Adrenal gland (tissue), 19 donors: ENCODE measurements at regions of chr7 and their contacts with region 1.

Region 1: GRCh38 chr7:93055543-93056107 is 62.2 kb downstream of the SAMD9 start:
- DNase-seq: no peak
- H3K4me3 ChIP-seq: no peak overlapping the region
- H3K27ac ChIP-seq: no peak overlapping the region
- H3K4me1 ChIP-seq: peaks cover 0 to 7% of the 10 kb centered on the region in 2 donors
- H3K27me3 ChIP-seq: peaks cover 3% of the 10 kb centered on the region
- CTCF ChIP-seq: peak; percentile 58 to 92 (median 82)
- POLR2A ChIP-seq: no peak

Region 2: DNA sequence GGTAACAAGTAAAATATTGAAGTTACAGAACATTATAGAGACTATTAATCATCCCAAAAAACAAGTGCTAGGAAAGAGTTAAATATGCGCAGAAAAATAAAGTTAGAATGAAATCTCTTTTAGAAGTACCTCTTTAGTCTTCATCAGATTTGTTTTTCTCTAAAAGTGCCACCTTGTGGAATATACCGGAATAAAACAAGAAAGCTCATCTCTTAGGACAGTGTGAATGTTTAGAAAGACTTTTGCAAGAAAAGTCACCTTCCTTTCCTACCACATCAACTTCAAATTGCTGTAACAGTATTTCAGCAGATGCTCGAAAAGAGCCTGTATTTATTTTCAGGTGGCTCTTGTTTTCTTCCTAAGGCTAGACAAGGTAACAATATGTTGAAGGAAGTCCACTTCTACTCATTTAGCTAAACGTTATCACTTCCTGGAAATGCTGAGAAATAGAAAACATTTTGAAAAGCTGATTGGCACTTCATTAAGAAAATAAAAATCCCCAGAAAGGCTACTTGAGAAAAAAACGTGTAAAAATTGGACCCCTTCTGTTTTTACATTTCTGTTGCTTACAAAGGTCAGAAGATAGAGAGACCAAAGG is 445.6 kb before region 1 on chr7:
- intact Hi-C with region 1: loop called in 1 of 2 experiments (anchors 10 kb)
- DNase-seq: no peak
- H3K4me3 ChIP-seq: no peak overlapping the region
- H3K27ac ChIP-seq: no peak overlapping the region
- H3K4me1 ChIP-seq: peaks cover 15 to 39% of the 10 kb centered on the region in 2 donors
- H3K27me3 ChIP-seq: no peaks in the 10 kb centered on the region
- CTCF ChIP-seq: peak in 5 of 6 experiments; percentile 29 to 52 (median 47)
- POLR2A ChIP-seq: no peak

Region 3: DNA sequence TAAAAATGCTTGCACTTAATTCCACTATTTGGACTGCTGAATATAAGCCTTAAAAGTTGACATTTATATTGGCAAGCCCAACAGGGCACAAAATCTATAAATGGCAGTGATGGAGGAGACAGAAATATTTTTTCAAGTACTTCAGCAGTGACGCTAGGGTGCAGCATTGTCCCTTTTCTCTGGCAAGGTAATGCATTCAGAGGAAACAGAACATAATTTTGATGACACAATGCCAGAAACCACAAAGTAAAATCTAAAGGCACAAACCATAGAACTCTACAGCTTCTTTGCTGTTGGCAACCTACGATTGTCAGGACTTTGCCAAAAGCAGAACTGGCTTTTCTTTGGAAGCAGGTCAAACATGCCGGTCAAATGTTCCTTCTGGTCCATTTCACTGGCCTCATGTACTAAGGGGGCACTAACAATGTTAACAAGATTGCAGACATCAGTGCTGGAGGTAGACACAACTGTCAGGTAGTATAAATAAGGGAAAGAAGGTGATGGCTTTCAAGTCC is 434.5 kb before region 1 on chr7:
- intact Hi-C with region 1: loop called (anchors 10 kb)
- DNase-seq: peak; percentile 70 to 85 (median 78)
- H3K4me3 ChIP-seq: no peak overlapping the region
- H3K27ac ChIP-seq: peak overlapping the region in 3 of 5 donors; percentile 33 to 68 (median 63)
- H3K4me1 ChIP-seq: peaks cover 6 to 23% of the 10 kb centered on the region in 2 donors
- H3K27me3 ChIP-seq: no peaks in the 10 kb centered on the region
- CTCF ChIP-seq: peak; percentile 67 to 91 (median 88)
- POLR2A ChIP-seq: no peak

Region 4: GRCh38 chr7:92997152-92997551 is 58.5 kb before region 1 on chr7:
- intact Hi-C with region 1: loop called in 1 of 2 experiments (anchors 10 kb)
- DNase-seq: no peak
- H3K4me3 ChIP-seq: no peak overlapping the region
- H3K27ac ChIP-seq: no peak overlapping the region
- H3K4me1 ChIP-seq: no peaks in the 10 kb centered on the region
- H3K27me3 ChIP-seq: no peaks in the 10 kb centered on the region
- CTCF ChIP-seq: no peak
- POLR2A ChIP-seq: no peak

Region 5: GRCh38 chr7:93133005-93133404 is 77.4 kb after region 1 on chr7:
- intact Hi-C with region 1: no loop called
- DNase-seq: no peak
- H3K4me3 ChIP-seq: no peak overlapping the region
- H3K27ac ChIP-seq: no peak overlapping the region
- H3K4me1 ChIP-seq: no peaks in the 10 kb centered on the region
- H3K27me3 ChIP-seq: no peaks in the 10 kb centered on the region
- CTCF ChIP-seq: no peak
- POLR2A ChIP-seq: no peak